Gastrocnemius medialis (tissue), 4 donors: ENCODE measurements at regions of chr14 and their contacts with region 1.

Region 1: GRCh38 chr14:102774391-102775153 is 2.7 kb upstream of the TRAF3 start:
- DNase-seq: peak; percentile 33 to 43
- ATAC-seq: peak; percentile 37 to 52
- H3K4me3 ChIP-seq: no peak overlapping the region
- H3K27ac ChIP-seq: no peak overlapping the region
- H3K4me1 ChIP-seq: peaks cover 5 to 6% of the 10 kb centered on the region in 2 donors
- H3K27me3 ChIP-seq: no peaks in the 10 kb centered on the region
- CTCF ChIP-seq: peak; percentile 33 to 70 (median 53)
- POLR2A ChIP-seq: no peak

Region 2: GRCh38 chr14:102694530-102695166 is 79.9 kb before region 1 on chr14:
- in situ Hi-C with region 1: no loop called
- intact Hi-C with region 1: loop called (anchors 5 kb)
- DNase-seq: peak; percentile 40 to 41
- ATAC-seq: peak; percentile 46 to 75
- H3K4me3 ChIP-seq: no peak overlapping the region
- H3K27ac ChIP-seq: no peak overlapping the region
- H3K4me1 ChIP-seq: peaks cover 49 to 51% of the 10 kb centered on the region in 2 donors
- H3K27me3 ChIP-seq: no peaks in the 10 kb centered on the region
- CTCF ChIP-seq: peak; percentile 55 to 75 (median 68)
- POLR2A ChIP-seq: no peak

Region 3: GRCh38 chr14:102819747-102820330 is 45.3 kb after region 1 on chr14:
- in situ Hi-C with region 1: no loop called
- intact Hi-C with region 1: loop called (anchors 5 kb)
- DNase-seq: no peak
- ATAC-seq: no peak
- H3K4me3 ChIP-seq: no peak overlapping the region
- H3K27ac ChIP-seq: no peak overlapping the region
- H3K4me1 ChIP-seq: peaks cover 2 to 9% of the 10 kb centered on the region in 2 donors
- H3K27me3 ChIP-seq: no peaks in the 10 kb centered on the region
- CTCF ChIP-seq: no peak
- POLR2A ChIP-seq: no peak

Region 4: GRCh38 chr14:102840756-102841528 is 66.4 kb after region 1 on chr14:
- in situ Hi-C with region 1: no loop called
- intact Hi-C with region 1: loop called (anchors 5 kb)
- DNase-seq: no peak
- ATAC-seq: no peak
- H3K4me3 ChIP-seq: no peak overlapping the region
- H3K27ac ChIP-seq: no peak overlapping the region
- H3K4me1 ChIP-seq: no peaks in the 10 kb centered on the region
- H3K27me3 ChIP-seq: no peaks in the 10 kb centered on the region
- CTCF ChIP-seq: no peak
- POLR2A ChIP-seq: no peak